ENCODE measurements at regions of chr5 and their contacts with region 1.

Region 1: GRCh38 chr5:168291464-168291961 is at the start of gene WWC1:
- DNase-seq: peak; percentile 88 to 96 (median 94)
- ATAC-seq: peak; percentile 81 to 87 (median 85)
- H3K4me3 ChIP-seq: peak within 1 kb of the TSS; percentile 69 to 93 (median 80)
- H3K27ac ChIP-seq: peak within 1 kb of the TSS; percentile 50 to 81 (median 68)
- H3K4me1 ChIP-seq: peaks cover 7 to 33% (median 13%) of the 10 kb centered on the region in 3 donors
- H3K27me3 ChIP-seq: no peaks in the 10 kb centered on the region
- CTCF ChIP-seq: peak in 2 of 4 donors; percentile 22 to 23
- total RNA-seq, gene WWC1: 36.4 to 54.2 (median 41.8) TPM

Region 2: DNA sequence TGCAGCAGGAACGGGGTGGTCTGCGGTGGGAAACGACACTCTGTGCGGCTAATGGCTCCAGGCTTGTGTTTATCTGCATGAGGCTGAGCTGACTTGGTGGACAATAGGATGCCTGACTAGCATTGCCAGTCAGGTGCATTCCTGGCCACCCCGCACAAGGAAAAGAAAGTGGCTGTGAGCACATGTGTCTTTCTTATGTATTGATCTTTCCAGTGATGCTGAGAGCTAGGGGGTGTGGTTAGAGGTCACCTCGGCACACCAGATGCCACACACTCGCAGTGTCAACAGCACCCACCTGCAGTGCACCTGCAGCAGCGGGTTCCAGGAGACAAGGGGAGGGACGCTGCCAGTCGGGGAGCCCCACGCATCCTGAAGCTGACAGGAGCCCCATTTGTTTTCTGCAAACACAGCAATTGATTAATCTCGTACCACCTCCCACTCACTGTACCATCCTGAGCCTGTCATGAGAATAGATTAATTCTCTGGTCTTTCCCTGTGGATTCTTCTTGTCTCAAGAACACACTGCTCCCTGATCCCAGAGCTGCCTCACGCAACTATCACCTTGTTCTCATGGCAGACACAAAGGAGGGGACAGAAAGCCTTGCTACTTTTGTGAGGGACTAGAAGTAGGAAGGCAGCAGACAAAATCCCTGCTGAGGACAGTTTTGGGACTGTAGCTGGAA is 251.8 kb before region 1 on chr5:
- intact Hi-C with region 1: no loop called
- DNase-seq: peak in 1 of 6 donors; percentile 4
- ATAC-seq: peak in 3 of 4 donors; percentile 43 to 66 (median 65)
- H3K4me3 ChIP-seq: no peak overlapping the region
- H3K27ac ChIP-seq: no peak overlapping the region
- H3K4me1 ChIP-seq: no peaks in the 10 kb centered on the region
- H3K27me3 ChIP-seq: no peaks in the 10 kb centered on the region
- CTCF ChIP-seq: no peak

Region 3: DNA sequence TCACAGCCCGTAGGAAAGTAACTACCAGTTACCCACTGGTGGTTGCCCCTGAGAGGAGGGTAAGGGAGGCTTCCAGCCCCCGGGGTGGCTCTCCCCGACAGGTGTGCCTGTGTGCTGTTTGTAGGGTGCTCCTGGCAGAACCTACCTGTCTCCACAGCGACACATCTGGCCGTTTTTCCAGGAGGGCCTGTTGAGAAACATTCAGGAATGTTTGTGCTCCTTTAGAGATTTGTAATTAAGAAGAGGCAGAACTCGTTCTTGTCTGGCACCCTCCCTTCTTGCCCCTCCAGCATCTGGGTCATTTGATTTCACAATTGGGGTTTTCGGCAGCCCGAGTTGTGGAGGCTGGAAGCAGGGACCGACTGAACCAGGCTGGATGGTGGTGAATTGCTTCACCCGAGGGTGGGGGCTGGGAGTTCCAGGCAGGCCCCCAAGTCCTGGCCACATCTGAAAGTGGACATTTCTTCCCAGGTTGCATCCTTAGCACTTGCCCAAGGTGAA is 74.1 kb after region 1 on chr5:
- intact Hi-C with region 1: loop called in 1 of 3 experiments (anchors 10 kb)
- DNase-seq: peak; percentile 55 to 71 (median 61)
- ATAC-seq: peak; percentile 76 to 84 (median 77)
- H3K4me3 ChIP-seq: no peak overlapping the region
- H3K27ac ChIP-seq: peak overlapping the region in 3 of 4 donors; percentile 43 to 73 (median 62)
- H3K4me1 ChIP-seq: peaks cover 4 to 34% (median 30%) of the 10 kb centered on the region in 3 donors
- H3K27me3 ChIP-seq: no peaks in the 10 kb centered on the region
- CTCF ChIP-seq: peak in 3 of 4 donors; percentile 14 to 34 (median 31)

Region 4: DNA sequence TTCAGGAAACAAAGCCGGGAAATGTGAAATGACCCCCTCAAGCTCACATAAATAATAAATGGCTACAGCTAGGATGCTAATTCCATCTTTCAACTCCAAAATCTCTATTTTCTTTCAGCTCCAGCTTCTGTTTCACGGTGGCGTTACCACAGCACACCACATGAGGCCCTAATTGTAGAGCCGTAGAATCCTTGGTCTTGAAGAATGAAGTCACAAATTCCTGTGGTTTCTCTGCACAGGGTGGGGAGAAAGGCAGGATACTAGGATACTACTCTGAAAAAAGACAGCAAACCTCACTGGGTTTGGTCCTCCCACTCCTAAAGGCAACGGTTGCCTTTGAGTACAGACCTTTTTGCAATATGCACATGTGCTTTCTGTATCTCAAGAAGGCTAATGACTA is 180.8 kb after region 1 on chr5:
- intact Hi-C with region 1: no loop called
- DNase-seq: no peak
- ATAC-seq: peak in 2 of 4 donors; percentile 54 to 75
- H3K4me3 ChIP-seq: no peak overlapping the region
- H3K27ac ChIP-seq: no peak overlapping the region
- H3K4me1 ChIP-seq: no peaks in the 10 kb centered on the region
- H3K27me3 ChIP-seq: no peaks in the 10 kb centered on the region
- CTCF ChIP-seq: no peak